Calu3 (cell line): ENCODE measurements at regions of chr6 and their contacts with region 1.

Region 1: DNA sequence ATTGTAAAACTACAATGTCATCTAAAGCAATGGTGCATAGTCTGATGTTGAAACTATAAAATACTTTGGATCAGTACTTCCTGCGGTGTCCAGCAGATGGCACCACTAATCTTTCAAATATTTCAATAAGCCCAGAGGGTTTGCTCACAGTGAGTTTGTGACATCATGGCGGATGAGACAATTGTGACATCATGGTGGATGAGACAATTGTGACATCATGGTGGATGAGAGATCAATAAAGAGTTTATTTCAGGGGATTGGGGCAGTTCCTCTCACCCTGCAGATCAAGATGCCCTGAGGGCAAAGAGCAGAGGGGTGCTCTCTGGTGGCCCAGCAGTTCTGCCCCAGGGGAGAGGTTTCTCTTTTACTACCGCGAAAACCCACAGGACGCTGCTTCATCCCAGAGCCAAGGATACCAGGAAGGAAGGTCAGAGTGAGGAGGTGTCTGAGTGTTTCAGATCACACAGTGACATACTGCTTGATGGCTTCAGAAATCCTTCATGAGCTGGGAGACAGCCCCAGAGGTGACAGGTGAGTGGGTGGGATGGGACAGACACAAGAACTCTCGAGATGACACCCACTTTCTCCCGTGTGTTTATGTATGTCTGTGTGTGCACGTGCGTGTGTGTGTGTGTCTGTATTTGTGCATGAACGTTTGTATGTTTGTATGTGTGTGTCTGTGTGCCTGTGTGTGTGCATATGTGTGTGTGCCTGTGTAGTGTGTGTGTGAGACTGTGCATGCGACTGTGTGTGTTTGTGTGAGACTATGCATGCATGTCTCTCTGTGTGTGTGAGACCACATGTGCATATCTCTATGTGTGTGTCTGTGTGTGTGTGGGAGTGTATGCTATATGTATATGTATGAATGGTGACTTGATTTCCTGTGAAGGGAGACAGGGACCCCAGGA is 7.3 kb upstream of the ULBP2 start:
- DNase-seq: peak; percentile 50
- H3K4me3 Mint-ChIP-seq: no peak overlapping the region
- H3K27ac Mint-ChIP-seq: no peak overlapping the region
- H3K4me1 Mint-ChIP-seq: peaks cover 9% of the 10 kb centered on the region
- H3K27me3 Mint-ChIP-seq: peaks cover 96% of the 10 kb centered on the region
- CTCF ChIP-seq: no peak

Region 2: GRCh38 chr6:150016324-150017185 is 82.1 kb after region 1 on chr6:
- CTCF ChIA-PET with region 1: no interaction called
- intact Hi-C with region 1: loop called (anchors 2 kb)
- DNase-seq: peak; percentile 43
- H3K4me3 Mint-ChIP-seq: no peak overlapping the region
- H3K27ac Mint-ChIP-seq: no peak overlapping the region
- H3K4me1 Mint-ChIP-seq: peaks cover 10% of the 10 kb centered on the region
- H3K27me3 Mint-ChIP-seq: peaks cover 49% of the 10 kb centered on the region
- CTCF ChIP-seq: no peak